A673 (cell line): ENCODE measurements at regions of chr2 and their contacts with region 1.

Region 1: DNA sequence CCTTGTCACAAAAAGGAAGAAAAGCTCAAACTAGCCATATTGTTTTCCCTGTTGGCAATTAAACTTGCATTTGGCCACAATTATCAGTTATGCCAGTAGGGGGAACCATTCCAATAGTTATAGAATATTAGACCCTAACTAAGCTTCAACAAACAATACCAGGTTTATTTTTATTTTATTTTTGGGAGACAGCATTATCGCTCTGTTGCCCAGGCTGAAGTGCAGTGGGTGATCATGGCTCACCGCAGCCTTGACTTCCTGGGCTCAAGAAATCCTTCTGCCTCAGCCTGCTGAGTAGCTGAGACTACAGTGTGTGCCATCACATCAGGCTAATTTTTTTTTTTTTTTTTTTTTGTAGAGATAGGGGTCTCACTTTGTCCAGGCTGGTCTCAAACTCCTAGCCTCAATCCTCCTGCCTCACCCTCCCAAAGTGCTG is 102.1 kb downstream of the ATAD2B start:
- DNase-seq: peak; percentile 65
- H3K4me3 ChIP-seq: no peak overlapping the region
- H3K27ac ChIP-seq: no peak overlapping the region
- H3K4me1 ChIP-seq: no peaks in the 10 kb centered on the region
- H3K27me3 ChIP-seq: no peaks in the 10 kb centered on the region
- CTCF ChIP-seq: peak; percentile 78

Region 2: DNA sequence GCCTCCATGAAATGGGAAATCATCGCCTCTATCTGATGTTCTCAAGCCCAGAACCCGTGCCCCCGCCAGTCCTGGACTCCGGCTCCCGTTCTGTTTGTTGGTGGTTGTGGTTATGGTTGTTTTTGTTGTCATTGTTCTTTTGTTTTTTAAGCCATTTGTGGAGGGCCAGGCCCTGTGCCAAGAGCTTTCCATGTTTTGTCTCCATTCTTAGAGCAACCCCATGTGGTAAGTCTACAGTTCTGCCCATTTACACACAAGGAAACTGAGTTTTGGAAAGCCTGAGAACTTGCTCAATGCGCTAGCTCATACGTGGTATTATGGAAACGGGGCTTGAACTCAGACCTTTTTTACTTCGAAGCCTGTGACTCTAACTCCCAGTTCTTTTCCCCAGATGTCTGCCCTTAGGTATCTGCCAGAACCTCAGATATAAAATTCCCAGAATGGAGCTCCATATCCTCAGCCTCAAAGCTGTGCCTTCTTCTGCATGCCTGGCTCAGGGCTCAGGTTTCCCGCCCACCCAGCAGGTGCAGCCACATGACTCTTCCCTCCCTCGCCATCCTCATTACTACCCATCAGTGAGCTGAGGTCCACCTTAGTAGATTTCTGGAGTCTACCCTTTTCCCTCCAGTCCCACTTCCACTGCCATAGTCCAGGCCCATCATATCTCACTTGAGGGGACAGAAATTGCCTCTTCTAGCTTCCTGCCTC is 245.7 kb before region 1 on chr2:
- CTCF ChIA-PET with region 1: no interaction called
- POLR2A ChIA-PET with region 1: no interaction called
- intact Hi-C with region 1: no loop called
- DNase-seq: no peak
- H3K4me3 ChIP-seq: no peak overlapping the region
- H3K27ac ChIP-seq: no peak overlapping the region
- H3K4me1 ChIP-seq: peaks cover 2% of the 10 kb centered on the region
- H3K27me3 ChIP-seq: no peaks in the 10 kb centered on the region
- CTCF ChIP-seq: no peak

Region 3: DNA sequence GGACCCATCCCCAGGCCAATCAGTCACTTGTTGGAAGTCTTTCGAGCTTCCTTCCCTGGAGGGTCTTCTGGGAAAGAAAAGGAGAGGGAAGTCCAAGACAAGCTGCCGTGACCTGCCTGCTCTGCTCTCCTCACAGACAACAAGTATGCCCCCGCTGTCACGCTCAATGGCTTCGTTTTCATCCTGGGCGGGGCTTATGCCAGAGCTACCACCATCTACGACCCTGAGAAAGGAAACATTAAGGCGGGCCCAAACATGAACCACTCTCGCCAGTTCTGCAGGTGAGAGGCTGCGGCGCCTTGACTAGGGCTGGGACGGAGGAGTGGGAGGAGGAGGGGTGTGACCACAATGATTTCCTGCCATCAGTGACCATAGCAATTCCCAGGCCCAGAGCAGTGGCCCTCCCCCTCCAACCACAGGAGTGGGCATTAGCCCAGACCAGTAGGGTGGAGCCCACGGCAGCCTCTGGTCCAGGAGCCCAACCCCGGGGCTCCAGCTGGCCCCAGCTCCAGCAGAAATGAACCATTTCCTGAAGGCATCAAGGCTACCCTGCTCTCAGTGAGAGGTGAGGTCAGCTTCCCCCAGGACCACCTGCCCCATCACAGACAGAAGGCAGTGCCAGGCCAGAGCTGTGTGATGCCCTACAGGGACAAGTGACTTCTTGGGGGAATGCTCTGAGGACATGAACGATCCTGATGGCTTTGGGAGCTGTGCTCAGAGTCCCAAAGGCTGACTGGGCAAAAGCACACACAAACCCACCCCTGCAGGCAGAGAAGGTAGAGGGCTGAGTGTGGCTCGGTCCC is 121.0 kb before region 1 on chr2:
- CTCF ChIA-PET with region 1: no interaction called
- POLR2A ChIA-PET with region 1: no interaction called
- intact Hi-C with region 1: no loop called
- DNase-seq: no peak
- H3K4me3 ChIP-seq: no peak overlapping the region
- H3K27ac ChIP-seq: no peak overlapping the region
- H3K4me1 ChIP-seq: peaks cover 7% of the 10 kb centered on the region
- H3K27me3 ChIP-seq: no peaks in the 10 kb centered on the region
- CTCF ChIP-seq: no peak

Region 4: DNA sequence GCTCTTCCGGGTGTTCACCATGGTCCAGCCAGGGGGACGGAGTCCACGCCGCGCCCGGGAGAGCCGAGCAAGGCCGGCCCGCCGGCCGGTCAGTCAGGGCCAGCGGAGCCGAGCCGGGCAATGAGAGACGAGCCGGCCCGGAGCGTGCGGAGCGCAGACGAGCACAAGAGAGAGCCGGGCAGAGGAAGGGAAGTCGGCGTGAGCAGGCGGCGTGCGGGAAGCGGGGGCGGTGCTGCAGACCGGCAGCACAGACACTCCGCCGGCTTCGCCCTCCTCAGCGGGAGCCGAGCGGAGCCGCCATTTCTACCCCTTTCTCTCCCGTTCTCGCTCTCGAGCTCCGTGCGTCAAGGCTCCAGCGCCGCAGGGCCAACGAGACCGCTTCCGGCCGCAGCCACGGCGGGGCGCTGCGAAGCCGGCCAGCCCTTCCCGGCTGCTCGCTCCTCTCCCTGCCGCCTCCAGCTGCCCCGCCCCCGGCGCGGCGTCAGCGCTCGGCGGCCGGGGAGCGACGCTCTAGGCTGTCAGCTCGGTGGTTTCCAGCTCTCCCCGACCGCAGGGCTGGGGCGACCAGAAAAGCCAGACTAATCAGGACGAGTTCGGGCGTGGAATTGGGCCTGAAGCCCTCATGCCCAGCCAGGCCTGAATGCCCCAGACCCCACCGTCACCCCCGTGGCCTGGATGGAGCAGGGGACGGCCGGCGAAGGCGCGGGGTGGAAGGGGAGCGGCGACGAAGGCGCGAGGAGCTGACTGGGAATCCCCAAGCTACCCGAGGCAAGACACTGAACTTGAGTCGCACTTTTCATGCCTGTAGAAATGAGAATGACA is 102.2 kb after region 1 on chr2 and contains the start of gene ATAD2B:
- CTCF ChIA-PET with region 1: interaction called, 8 read pairs
- POLR2A ChIA-PET with region 1: no interaction called
- intact Hi-C with region 1: loop called (anchors 1 kb)
- DNase-seq: peak; percentile 97
- H3K4me3 ChIP-seq: peak within 1 kb of the TSS; percentile 99
- H3K27ac ChIP-seq: peak within 1 kb of the TSS; percentile 99
- H3K4me1 ChIP-seq: peaks cover 10% of the 10 kb centered on the region
- H3K27me3 ChIP-seq: no peaks in the 10 kb centered on the region
- CTCF ChIP-seq: peak; percentile 77
- total RNA-seq, gene ATAD2B: 27.9 and 28.5 TPM in 2 replicates

Region 5: GRCh38 chr2:24075915-24076848 is 251.4 kb after region 1 on chr2 and contains the start of gene SF3B6:
- CTCF ChIA-PET with region 1: no interaction called
- POLR2A ChIA-PET with region 1: no interaction called
- intact Hi-C with region 1: loop called (anchors 5 kb)
- DNase-seq: peak; percentile 100
- H3K4me3 ChIP-seq: peak within 1 kb of the TSS; percentile 82
- H3K27ac ChIP-seq: peak within 1 kb of the TSS; percentile 67
- H3K4me1 ChIP-seq: peaks cover 7% of the 10 kb centered on the region
- H3K27me3 ChIP-seq: no peaks in the 10 kb centered on the region
- CTCF ChIP-seq: no peak
- total RNA-seq, gene SF3B6: 123 and 130 TPM in 2 replicates

Region 6: GRCh38 chr2:24084386-24085361 is 259.9 kb after region 1 on chr2 and contains the start of gene TP53I3:
- CTCF ChIA-PET with region 1: interaction called, 16 read pairs
- POLR2A ChIA-PET with region 1: no interaction called
- intact Hi-C with region 1: loop called (anchors 5 kb)
- DNase-seq: peak; percentile 83
- H3K4me3 ChIP-seq: peak within 1 kb of the TSS; percentile 63
- H3K27ac ChIP-seq: peak within 1 kb of the TSS; percentile 53
- H3K4me1 ChIP-seq: peaks cover 4% of the 10 kb centered on the region
- H3K27me3 ChIP-seq: no peaks in the 10 kb centered on the region
- CTCF ChIP-seq: peak; percentile 88
- total RNA-seq, gene TP53I3: 2.8 and 3.0 TPM in 2 replicates

Region 7: DNA sequence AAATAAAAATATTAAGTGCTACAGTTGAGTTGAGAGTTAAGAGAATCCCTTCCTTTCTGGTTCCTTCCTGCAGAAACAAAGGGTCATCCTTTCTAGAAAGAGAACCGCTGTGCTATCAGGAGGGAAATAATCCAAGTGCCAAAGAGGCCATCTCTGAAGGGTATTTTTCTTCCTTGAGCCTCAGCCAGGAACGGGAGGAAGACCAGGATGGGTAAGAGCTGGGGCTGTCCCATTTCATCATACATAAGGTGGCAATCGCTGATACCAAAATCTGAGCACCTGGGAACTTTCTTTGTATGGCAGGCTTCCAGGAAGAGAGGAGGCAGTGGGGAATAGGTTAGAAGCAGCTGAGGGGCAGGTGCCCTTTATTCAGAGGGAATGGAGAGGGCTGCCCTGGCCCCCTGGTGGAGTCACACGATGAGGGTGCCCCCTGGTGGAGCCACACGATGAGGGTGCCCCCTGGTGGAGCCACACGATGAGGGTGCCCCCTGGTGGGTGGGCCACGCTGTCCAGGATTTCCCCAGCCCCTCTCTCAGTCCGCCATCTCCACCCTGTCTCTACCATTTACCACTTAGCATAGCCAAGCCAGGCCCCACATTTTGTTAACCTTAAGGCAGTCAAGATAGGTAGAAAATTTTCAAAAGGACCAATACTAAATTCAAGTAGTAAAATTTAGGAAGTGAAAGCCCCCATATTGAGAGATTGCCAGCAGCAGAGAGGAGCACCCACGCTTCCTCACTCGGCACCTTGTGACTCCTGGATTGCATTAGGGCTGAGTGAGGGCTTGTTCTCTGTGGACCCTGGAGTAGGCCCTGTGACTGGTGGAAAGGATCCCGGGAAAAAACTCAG is 339.6 kb after region 1 on chr2:
- CTCF ChIA-PET with region 1: interaction called, 6 read pairs
- POLR2A ChIA-PET with region 1: no interaction called
- intact Hi-C with region 1: loop called (anchors 10 kb)
- DNase-seq: peak; percentile 30
- H3K4me3 ChIP-seq: no peak overlapping the region
- H3K27ac ChIP-seq: no peak overlapping the region
- H3K4me1 ChIP-seq: no peaks in the 10 kb centered on the region
- H3K27me3 ChIP-seq: no peaks in the 10 kb centered on the region
- CTCF ChIP-seq: peak; percentile 83

Region 8: GRCh38 chr2:24382363-24383073 is 557.7 kb after region 1 on chr2:
- CTCF ChIA-PET with region 1: no interaction called
- POLR2A ChIA-PET with region 1: no interaction called
- intact Hi-C with region 1: loop called (anchors 5 kb)
- DNase-seq: peak; percentile 87
- H3K4me3 ChIP-seq: no peak overlapping the region
- H3K27ac ChIP-seq: no peak overlapping the region
- H3K4me1 ChIP-seq: no peaks in the 10 kb centered on the region
- H3K27me3 ChIP-seq: no peaks in the 10 kb centered on the region
- CTCF ChIP-seq: peak; percentile 64